ENCODE measurements at regions of chr12 and their contacts with region 1.

Region 1: GRCh38 chr12:575948-576612 is 87.2 kb downstream of the NINJ2 start:
- DNase-seq: peak; percentile 85
- ATAC-seq: peak; percentile 94
- H3K4me3 Mint-ChIP-seq: no peak overlapping the region
- H3K27ac Mint-ChIP-seq: peak overlapping the region; percentile 70
- H3K4me1 Mint-ChIP-seq: peaks cover 43% of the 10 kb centered on the region
- H3K27me3 Mint-ChIP-seq: no peaks in the 10 kb centered on the region

Region 2: GRCh38 chr12:262817-263216 is 313.3 kb before region 1 on chr12 and contains the start of gene SLC6A13:
- CTCF ChIA-PET with region 1: no interaction called
- DNase-seq: no peak
- ATAC-seq: no peak
- H3K4me3 Mint-ChIP-seq: no peak within 1 kb of the TSS
- H3K27ac Mint-ChIP-seq: no peak within 1 kb of the TSS
- H3K4me1 Mint-ChIP-seq: peaks cover 8% of the 10 kb centered on the region
- H3K27me3 Mint-ChIP-seq: peaks cover 19% of the 10 kb centered on the region
- total RNA-seq, gene SLC6A13: 0.35 TPM

Region 3: GRCh38 chr12:563250-563781 is 12.8 kb before region 1 on chr12:
- CTCF ChIA-PET with region 1: interaction called, 22 read pairs
- DNase-seq: peak; percentile 83
- ATAC-seq: peak; percentile 88
- H3K4me3 Mint-ChIP-seq: peak overlapping the region; percentile 68
- H3K27ac Mint-ChIP-seq: peak overlapping the region; percentile 91
- H3K4me1 Mint-ChIP-seq: peaks cover 42% of the 10 kb centered on the region
- H3K27me3 Mint-ChIP-seq: peaks cover 2% of the 10 kb centered on the region

Region 4: DNA sequence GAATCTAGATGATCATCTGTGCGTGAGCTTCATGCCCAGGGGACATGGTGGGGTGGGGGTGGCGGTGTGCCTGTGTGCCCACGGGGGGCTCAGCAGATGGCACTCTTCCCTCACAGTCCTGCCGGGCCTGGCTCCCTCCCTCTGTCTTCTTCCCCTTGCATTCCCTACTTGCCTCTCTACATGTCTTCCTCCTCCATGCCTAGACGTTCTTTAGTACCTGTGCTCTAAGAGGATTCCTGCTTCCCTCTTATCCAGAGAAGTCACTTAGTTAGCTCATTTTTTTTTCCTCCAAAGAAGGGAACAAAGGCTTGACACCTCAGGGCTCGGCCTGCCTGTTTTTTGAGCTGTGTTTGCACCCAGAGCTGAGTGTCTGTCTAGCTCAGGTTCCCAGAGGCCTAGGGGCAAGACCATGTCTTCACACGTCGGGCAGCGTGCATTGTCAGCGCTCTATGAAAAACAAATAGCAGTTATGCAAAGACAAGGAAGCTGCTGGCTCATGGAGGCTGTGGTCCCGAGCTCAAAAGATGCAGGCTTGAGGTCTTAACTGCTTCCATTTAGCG is 38.4 kb after region 1 on chr12:
- CTCF ChIA-PET with region 1: interaction called, 38 read pairs
- DNase-seq: peak; percentile 54
- ATAC-seq: no peak
- H3K4me3 Mint-ChIP-seq: no peak overlapping the region
- H3K27ac Mint-ChIP-seq: peak overlapping the region; percentile 12
- H3K4me1 Mint-ChIP-seq: peaks cover 42% of the 10 kb centered on the region
- H3K27me3 Mint-ChIP-seq: no peaks in the 10 kb centered on the region

Region 5: DNA sequence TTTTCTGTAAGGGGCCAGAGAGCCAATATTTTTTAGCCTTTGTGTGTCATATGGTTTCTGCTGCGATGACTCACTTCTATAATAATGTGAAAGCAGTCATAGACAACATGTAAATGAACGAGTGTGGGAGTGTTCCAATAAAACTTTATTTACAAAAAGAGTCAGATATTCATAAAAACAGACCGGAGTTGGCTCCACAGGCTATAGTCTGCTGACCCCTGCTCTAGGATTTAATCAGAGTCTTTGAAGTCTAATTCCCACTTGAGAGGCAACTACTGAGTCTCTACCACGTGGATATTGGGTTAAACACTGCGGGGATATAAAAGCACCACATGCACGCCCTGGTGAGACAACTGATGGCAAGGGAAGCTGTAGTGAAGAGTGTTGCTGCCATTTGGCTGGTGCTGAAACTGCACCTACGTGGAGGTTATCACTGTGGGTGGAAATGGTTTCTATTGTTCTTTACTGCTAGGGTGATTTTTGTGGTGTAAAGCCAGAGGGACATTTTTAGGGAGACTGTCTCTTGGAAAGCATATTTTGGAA is 90.8 kb after region 1 on chr12:
- CTCF ChIA-PET with region 1: interaction called, 10 read pairs
- DNase-seq: peak; percentile 71
- ATAC-seq: peak; percentile 79
- H3K4me3 Mint-ChIP-seq: peak overlapping the region; percentile 47
- H3K27ac Mint-ChIP-seq: peak overlapping the region; percentile 82
- H3K4me1 Mint-ChIP-seq: peaks cover 57% of the 10 kb centered on the region
- H3K27me3 Mint-ChIP-seq: peaks cover 6% of the 10 kb centered on the region

Region 6: GRCh38 chr12:761256-761655 is 185.2 kb after region 1 on chr12:
- CTCF ChIA-PET with region 1: interaction called, 28 read pairs
- DNase-seq: no peak
- ATAC-seq: no peak
- H3K4me3 Mint-ChIP-seq: no peak overlapping the region
- H3K27ac Mint-ChIP-seq: no peak overlapping the region
- H3K4me1 Mint-ChIP-seq: peaks cover 58% of the 10 kb centered on the region
- H3K27me3 Mint-ChIP-seq: no peaks in the 10 kb centered on the region

Region 7: GRCh38 chr12:949453-950191 is 373.5 kb after region 1 on chr12 and contains the start of gene RAD52:
- CTCF ChIA-PET with region 1: interaction called, 20 read pairs
- DNase-seq: peak; percentile 98
- ATAC-seq: peak; percentile 84
- H3K4me3 Mint-ChIP-seq: peak within 1 kb of the TSS; percentile 98
- H3K27ac Mint-ChIP-seq: peak within 1 kb of the TSS; percentile 87
- H3K4me1 Mint-ChIP-seq: peaks cover 30% of the 10 kb centered on the region
- H3K27me3 Mint-ChIP-seq: no peaks in the 10 kb centered on the region
- total RNA-seq, gene RAD52: 14.6 to 21.8 TPM

Measured in activated CD8-positive, alpha-beta memory T cell treated with anti-CD3 and anti-CD28 coated beads, Interleukin-2, amount 10 ng/mL, durations not matched to agents 7 days and 5 days (primary cell).